Left cardiac atrium (tissue), 4 donors: ENCODE measurements at regions of chr16 and their contacts with region 1.

Region 1: GRCh38 chr16:64051824-64052223 is 1070.0 kb downstream of the CDH11 start:
- DNase-seq: no peak
- ATAC-seq: no peak

Region 2: DNA sequence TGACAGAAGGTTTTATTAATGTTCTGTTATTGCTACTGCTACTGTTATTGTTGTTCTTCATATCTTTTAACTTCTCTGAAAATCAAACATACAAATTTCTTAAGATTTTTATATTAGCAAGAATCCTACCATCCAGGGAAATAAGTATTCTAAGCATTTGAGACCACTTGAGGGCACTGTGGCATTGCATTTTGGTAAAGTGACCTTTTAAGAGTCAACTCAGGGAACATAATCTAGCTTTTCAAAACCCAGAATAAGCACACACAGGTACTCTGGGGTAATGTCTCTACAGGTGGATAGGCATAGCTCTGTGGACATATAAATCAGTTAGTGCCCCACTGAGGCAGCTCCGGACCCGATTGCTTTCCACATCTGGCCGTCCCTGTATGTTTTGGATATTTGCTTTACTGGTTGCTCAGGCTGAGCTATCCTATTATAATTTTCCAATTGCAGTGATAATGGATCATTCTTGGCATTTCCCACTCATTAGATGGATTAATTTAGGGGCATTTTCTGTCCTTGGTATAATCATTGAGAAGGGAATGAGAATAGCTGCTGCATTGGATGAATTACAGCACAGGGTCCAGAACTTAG is 590.5 kb before region 1 on chr16:
- intact Hi-C with region 1: loop called in 1 of 2 experiments (anchors 2 kb)
- DNase-seq: no peak
- ATAC-seq: peak in 1 of 2 donors; percentile 21

Region 3: GRCh38 chr16:64085296-64085695 is 33.5 kb after region 1 on chr16:
- intact Hi-C with region 1: no loop called
- DNase-seq: no peak
- ATAC-seq: no peak

Region 4: GRCh38 chr16:64346080-64346479 is 294.3 kb after region 1 on chr16:
- intact Hi-C with region 1: no loop called
- DNase-seq: no peak
- ATAC-seq: no peak